AG04449 (cell line): ENCODE measurements at regions of chr1 and their contacts with region 1.

Region 1: DNA sequence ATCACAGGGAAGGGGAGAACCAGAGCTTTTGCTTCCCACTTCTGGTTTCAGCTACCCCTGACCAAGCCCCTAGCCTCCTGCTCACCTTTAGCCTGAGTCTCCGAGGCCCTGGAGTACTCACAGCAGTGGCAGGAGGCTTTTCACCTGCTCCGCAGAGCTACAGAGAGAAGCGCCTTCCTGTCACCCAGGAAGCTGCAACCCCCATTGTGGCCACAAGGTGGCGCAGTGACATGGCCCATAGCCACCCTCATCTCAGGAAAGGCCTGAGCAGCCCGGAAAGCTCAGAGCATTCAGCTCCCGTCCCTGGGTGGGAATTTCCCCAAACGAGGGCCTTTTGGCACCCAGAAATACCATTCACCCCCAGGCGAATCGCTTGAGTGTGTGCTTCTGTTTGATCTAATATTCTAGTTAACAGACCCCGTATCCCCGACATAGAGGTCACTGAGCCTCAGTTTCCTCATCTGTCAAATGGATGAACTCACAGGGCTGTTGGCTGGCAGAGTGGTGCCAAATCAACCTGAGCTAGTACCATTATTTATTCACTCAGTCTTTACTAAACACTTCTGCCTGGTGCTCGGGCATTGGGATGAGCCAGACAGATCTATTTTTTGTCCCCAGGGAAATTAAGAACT is 25.3 kb downstream of the A3GALT2 start:
- DNase-seq: no peak
- H3K4me3 ChIP-seq: no peak overlapping the region
- CTCF ChIP-seq: peak; percentile 94

Region 2: DNA sequence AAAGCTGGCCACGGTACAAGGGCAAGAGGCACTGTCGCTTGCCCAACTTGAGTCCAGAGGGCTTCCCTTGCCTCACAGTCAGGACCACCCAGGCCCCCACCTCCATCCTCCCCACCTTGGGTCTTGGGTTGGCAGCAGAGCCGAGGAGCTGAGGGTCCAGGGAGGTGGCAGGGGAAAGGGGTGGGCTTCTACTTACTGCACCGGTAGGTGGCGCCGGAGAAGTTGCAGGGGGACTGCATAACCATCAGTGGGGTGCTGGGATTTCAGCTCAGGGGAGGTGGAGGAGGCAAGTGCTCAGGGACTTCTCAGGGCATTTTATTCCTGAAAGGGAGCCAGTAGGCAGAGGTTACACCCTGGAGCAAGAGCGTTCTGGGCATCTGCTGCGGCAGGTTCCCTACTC is 157.8 kb before region 1 on chr1:
- CTCF ChIA-PET with region 1: interaction called, 13 read pairs
- POLR2A ChIA-PET with region 1: no interaction called
- DNase-seq: no peak
- H3K4me3 ChIP-seq: no peak overlapping the region
- CTCF ChIP-seq: peak; percentile 63

Region 3: DNA sequence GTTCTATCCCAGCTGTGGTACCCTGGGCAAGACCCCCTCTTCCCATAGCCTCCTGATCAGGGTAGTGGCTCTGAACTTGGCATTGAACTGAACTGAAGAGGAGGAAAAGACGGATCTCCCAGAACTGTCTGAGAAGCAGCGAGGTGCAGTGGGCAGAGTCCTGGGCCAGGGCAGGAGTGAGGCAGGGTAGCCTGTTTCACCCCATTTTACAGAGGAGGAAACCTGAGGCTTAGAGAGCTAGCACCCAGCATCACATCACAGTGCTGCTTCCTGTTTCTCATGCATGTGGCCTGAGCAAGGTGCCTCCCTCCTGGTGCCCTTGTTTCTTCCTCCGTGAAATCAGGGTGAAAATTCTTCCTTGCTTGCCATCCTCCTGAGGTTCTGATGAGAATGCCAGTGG is 22.2 kb before region 1 on chr1:
- CTCF ChIA-PET with region 1: interaction called, 110 read pairs
- POLR2A ChIA-PET with region 1: no interaction called
- DNase-seq: no peak
- H3K4me3 ChIP-seq: no peak overlapping the region
- CTCF ChIP-seq: no peak

Region 4: GRCh38 chr1:33312413-33312749 is 16.8 kb after region 1 on chr1:
- CTCF ChIA-PET with region 1: interaction called, 39 read pairs
- POLR2A ChIA-PET with region 1: no interaction called
- DNase-seq: no peak
- H3K4me3 ChIP-seq: no peak overlapping the region
- CTCF ChIP-seq: no peak

Region 5: DNA sequence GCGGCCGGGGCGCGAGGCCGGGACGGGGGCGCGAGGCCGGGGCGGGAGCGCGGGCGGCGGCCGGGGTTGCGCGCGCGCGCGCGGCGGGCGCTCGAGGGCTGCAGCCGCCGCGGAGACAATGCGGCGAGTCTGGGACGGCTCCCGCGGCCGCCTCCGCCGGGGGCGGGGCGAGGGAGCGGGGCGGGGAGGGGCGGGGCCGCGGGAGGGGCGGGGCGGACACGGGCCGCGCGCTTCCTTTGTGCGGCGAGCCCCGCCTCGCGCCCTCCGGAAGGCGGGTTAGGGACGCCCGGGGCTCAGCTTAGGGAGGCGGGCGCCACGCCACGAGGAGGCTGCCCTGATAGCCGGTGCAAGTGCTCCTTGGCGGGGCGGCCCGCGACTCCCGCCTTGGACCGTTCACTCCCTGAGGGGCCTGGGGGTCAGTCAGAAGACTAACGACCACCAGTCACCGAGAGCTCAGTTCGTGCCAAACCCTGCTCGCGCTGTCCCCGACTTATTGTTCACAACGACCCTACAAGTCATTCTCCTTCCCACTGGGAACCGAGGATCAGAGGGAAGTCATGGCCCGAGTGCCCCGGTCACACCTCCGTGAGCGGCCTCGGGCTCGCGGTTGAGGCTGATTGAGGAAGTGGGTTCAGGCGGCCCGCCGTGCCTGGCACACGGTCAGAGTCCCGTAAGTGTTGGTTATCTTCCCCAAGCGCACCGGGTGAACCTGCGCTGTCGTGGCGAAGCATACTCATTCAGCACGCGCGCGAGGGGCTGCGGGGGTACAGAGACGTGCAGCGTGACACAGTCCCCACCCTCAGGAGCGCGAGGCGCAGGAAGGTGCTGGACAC is 54.4 kb after region 1 on chr1:
- CTCF ChIA-PET with region 1: interaction called, 13 read pairs
- POLR2A ChIA-PET with region 1: no interaction called
- DNase-seq: no peak
- H3K4me3 ChIP-seq: peak overlapping the region; percentile 77
- CTCF ChIP-seq: no peak

Region 6: DNA sequence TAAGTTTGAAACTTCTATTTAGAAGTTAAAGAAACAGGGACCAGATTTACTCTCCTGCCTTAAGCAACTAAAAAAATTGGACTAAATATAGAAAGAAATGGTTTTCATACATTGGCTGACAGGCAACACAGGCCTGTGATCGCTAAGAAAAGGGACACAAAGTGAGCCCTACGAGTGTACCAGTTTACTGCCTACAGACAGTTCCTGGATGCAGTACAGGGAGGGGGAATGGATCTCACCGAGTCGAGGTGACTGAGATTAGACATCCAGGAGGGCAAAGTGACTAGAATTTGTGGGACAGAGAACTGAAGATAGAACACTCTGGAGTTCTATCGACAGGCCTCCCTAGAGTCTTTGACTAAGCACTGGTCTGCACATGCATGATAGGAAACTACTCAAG is 119.3 kb after region 1 on chr1:
- CTCF ChIA-PET with region 1: no interaction called
- POLR2A ChIA-PET with region 1: no interaction called
- DNase-seq: no peak
- H3K4me3 ChIP-seq: no peak overlapping the region
- CTCF ChIP-seq: no peak

Region 7: GRCh38 chr1:33455539-33456501 is 160.3 kb after region 1 on chr1:
- CTCF ChIA-PET with region 1: interaction called, 79 read pairs
- POLR2A ChIA-PET with region 1: no interaction called
- DNase-seq: peak; percentile 77
- H3K4me3 ChIP-seq: no peak overlapping the region
- CTCF ChIP-seq: peak; percentile 87

Region 8: DNA sequence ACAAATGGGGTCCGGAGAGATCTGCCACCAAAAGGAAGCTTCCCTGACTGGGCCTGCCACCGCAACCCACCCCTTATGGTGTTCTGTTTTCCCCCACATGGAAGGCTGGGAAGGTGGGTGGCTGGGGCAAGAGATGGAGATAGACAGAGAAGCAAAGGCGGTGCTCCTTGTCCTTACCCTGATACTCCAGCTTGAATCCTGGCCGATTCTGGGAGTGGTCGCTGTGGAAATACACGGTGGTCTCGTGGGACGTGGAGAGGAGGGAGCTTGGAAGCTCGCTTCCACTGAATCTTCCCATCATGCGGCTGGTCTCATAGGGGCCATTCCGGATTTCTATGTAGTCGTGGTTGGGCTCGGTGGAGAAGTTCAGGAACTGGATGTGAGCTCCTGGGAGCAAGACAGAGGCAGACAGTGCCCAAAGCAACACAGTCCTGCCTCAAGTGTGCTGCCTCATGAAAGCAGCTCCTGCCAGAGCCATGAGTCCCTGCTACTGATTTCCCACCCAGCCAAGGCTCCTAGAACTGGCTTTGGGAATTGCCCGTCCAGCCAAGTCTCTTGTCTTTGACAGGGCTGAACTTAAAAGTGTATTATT is 315.4 kb after region 1 on chr1:
- CTCF ChIA-PET with region 1: interaction called, 39 read pairs
- POLR2A ChIA-PET with region 1: no interaction called
- DNase-seq: no peak
- H3K4me3 ChIP-seq: no peak overlapping the region
- CTCF ChIP-seq: no peak